ENCODE measurements at regions of chr17 and their contacts with region 1.

Region 1: GRCh38 chr17:49496183-49496866 is 1.2 kb downstream of the NGFR start:
- DNase-seq: no peak
- H3K4me3 ChIP-seq: peak overlapping the region; percentile 33
- CTCF ChIP-seq: peak; percentile 80

Region 2: GRCh38 chr17:49381063-49381462 is 115.3 kb before region 1 on chr17:
- CTCF ChIA-PET with region 1: no interaction called
- POLR2A ChIA-PET with region 1: no interaction called
- DNase-seq: no peak
- H3K4me3 ChIP-seq: no peak overlapping the region
- CTCF ChIP-seq: no peak

Region 3: GRCh38 chr17:49456183-49456965 is 40.0 kb before region 1 on chr17:
- CTCF ChIA-PET with region 1: interaction called, 11 read pairs
- POLR2A ChIA-PET with region 1: no interaction called
- DNase-seq: peak; percentile 46
- H3K4me3 ChIP-seq: no peak overlapping the region
- CTCF ChIP-seq: no peak

Region 4: DNA sequence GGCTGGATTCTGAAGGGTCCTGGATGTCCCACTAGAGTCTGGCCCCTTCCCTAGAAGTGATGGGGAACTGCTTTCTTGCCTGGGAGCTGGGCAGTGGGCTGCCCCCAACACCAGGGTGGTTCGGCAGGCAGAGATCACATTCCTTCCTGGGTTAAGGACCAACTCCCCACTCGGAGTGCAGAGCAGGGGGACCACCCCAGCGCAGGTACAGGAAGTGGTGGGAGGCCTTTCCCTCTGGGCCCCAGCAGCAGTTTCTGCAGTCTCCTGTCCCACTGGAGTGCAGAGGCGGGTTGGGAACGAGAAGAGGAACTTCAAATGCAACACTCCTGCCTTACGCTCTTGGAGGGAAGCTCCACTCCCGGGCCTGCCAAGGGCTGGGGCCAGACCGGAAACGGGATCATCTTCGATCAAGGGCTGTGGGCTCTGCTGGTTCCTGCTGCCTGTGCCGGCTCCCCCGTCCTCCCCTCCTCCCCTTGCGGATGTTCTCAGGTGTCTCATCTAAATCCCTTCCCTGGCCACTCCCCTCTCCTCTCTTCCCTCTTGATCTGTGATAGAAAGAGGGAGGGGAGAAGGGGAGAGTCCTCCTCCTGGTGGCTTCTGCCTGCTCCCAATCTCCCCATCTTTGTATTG is 10.2 kb before region 1 on chr17:
- CTCF ChIA-PET with region 1: interaction called, 32 read pairs
- POLR2A ChIA-PET with region 1: no interaction called
- DNase-seq: no peak
- H3K4me3 ChIP-seq: no peak overlapping the region
- CTCF ChIP-seq: no peak

Region 5: DNA sequence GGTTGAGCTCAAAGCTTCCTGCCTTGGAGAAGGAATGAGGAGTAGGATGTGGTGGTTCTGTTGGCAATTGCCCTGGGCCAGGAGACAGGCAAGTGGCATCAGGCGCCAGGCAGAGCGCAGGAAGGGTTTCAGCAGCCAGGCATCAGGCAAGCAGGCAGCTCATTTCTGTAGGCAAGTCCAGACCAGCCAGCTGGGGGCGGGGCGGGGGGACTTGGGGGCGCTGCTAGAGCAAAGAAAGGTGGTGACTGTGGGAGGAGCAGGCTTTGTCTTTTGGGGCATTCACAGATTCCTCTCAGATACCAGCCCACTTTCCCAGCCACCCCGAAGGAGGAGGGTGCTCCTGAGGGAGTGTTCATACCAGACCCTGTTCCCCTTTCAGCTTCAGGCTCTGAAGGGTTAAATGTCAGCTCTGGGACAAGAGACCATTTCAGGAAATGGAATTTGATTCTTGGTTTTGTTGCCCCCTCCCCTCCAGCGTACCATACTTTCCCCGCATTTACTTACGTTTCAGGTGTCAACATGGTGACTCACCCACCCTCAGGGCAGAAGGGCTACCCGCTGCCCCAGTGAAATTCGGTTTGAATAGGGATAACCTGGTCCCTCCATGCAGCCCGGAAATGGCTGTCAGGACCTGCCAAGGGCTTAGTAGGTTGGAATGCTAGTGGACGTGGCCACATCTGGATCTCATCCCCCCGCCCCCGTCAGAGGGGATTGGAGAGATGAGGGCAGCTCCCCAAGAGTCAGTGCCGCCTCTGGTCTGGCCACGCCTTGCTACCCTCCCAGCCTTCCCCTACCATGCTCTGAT is 11.9 kb after region 1 on chr17:
- CTCF ChIA-PET with region 1: interaction called, 48 read pairs
- POLR2A ChIA-PET with region 1: interaction called, 3 read pairs
- DNase-seq: no peak
- H3K4me3 ChIP-seq: no peak overlapping the region
- CTCF ChIP-seq: no peak

Region 6: DNA sequence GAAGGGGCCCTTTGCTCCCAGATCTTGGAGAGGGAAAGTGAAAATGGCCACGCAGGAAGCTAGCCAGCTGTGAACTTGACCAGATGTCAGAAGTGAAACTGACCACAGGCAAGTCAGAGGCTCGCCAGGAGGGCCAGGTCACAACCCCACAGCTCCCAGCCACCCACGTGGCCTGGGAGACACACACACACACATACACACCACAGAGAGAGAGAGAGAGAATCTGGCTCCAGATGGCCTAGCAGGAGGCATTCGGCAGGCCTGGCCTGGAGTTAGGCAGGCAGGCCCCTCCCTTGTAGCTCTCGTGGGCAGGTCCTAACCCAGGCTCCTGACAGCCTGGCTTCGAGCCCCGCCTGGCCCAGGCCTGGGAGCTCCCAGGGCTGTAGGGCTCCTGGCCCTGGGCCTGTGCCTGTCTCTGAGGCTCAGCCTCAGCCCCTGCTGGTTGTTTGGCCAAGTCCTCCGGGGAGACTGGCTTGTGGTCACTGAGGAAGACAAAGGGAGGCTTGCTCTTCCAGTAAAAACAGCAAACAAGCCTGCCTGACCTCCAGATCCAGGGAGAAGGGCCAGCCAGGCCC is 19.0 kb after region 1 on chr17:
- CTCF ChIA-PET with region 1: interaction called, 48 read pairs
- POLR2A ChIA-PET with region 1: no interaction called
- DNase-seq: peak; percentile 41
- H3K4me3 ChIP-seq: no peak overlapping the region
- CTCF ChIP-seq: peak; percentile 23

Region 7: GRCh38 chr17:49523706-49524472 is 27.6 kb after region 1 on chr17:
- CTCF ChIA-PET with region 1: interaction called, 10 read pairs
- POLR2A ChIA-PET with region 1: no interaction called
- DNase-seq: no peak
- H3K4me3 ChIP-seq: no peak overlapping the region
- CTCF ChIP-seq: no peak

Region 8: DNA sequence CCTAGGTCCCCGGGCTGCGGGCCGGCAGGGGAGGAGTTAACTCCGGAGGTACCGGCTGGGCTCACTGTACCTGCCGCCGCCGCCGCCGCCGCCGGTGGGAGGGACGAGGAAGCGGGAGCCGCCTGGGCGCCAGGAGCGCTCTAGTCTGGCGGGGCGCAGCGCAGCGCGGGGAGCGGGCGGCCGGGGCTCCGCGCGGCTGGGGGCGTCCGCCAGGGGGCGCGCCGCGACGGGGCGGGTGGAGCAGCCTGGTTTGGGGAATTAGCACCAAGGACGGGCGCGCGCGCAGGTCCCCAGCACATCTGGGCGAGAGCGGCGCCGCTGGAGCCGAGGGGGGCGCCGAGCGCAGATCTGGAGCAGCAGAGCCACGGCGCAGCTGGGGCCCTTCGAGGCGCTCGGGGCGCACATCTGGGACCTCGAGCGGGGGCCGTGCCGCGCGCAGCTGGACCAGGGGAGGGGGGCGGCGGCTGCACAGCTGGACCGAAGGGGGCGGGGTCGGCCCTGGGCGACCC is 79.3 kb after region 1 on chr17 and contains the start of gene NXPH3:
- CTCF ChIA-PET with region 1: no interaction called
- POLR2A ChIA-PET with region 1: no interaction called
- DNase-seq: no peak
- H3K4me3 ChIP-seq: peak within 1 kb of the TSS; percentile 64
- CTCF ChIP-seq: peak; percentile 29

Measured in AG04449 (cell line).